Activated CD4-positive, alpha-beta memory T cell treated with anti-CD3 and anti-CD28 coated beads, Interleukin-2, amount 10 ng/mL, durations not matched to agents 7 days and 5 days (primary cell): ENCODE measurements at regions of chr16 and their contacts with region 1.

Region 1: GRCh38 chr16:30370444-30371247 is at the start of gene TBC1D10B:
- DNase-seq: peak; percentile 100
- H3K4me3 Mint-ChIP-seq: peak within 1 kb of the TSS; percentile 86
- H3K27ac Mint-ChIP-seq: peak within 1 kb of the TSS; percentile 90
- H3K4me1 Mint-ChIP-seq: peaks cover 41% of the 10 kb centered on the region
- H3K27me3 Mint-ChIP-seq: no peaks in the 10 kb centered on the region
- total RNA-seq, gene TBC1D10B: 69.2 TPM

Region 2: GRCh38 chr16:30335598-30336474 is 34.8 kb before region 1 on chr16:
- CTCF ChIA-PET with region 1: no interaction called
- POLR2A ChIA-PET with region 1: interaction called, 10 read pairs
- DNase-seq: peak; percentile 39
- H3K4me3 Mint-ChIP-seq: peak overlapping the region; percentile 89
- H3K27ac Mint-ChIP-seq: peak overlapping the region; percentile 63
- H3K4me1 Mint-ChIP-seq: peaks cover 20% of the 10 kb centered on the region
- H3K27me3 Mint-ChIP-seq: no peaks in the 10 kb centered on the region

Region 3: DNA sequence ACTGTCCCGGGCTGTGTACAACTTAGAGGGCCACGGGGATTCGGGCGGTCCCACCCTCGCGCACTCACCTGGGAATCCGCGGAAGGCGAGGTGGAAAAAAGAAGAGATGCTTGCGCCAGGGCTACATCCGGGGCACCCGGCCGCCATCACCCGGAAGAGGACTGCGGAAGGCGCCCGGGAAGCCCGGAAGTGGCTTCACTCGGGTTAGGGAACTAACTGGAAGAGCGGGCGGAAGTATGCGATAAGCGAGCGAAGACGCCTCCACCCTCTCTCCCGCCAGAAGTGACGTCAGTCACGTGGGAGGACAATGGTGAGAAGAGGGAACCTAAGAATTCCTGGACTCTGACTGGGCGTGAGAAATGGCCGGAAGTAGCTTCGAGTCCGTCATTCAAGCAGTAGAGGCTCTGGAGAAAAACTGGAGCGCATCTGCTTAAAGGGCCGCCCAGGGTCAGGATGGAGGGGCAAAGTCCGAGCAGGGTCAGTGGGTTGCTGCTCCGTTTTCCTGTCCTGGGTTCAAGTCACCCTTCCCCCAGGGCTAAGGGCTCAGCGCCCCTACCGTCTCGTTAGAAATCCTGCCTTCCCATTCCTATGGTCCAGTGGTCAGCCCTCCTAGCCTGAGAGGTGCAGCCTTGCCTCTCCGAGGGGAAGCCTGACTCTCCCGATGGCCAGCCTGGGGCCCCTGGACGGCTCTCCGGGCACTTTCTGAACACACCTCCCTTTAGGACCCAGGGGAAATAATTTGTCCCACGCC is 15.3 kb before region 1 on chr16 and contains the start of gene CD2BP2:
- CTCF ChIA-PET with region 1: interaction called, 9 read pairs
- POLR2A ChIA-PET with region 1: interaction called, 83 read pairs
- DNase-seq: peak; percentile 88
- H3K4me3 Mint-ChIP-seq: peak within 1 kb of the TSS; percentile 90
- H3K27ac Mint-ChIP-seq: peak within 1 kb of the TSS; percentile 93
- H3K4me1 Mint-ChIP-seq: peaks cover 66% of the 10 kb centered on the region
- H3K27me3 Mint-ChIP-seq: no peaks in the 10 kb centered on the region
- total RNA-seq, gene CD2BP2: 75.6 to 75.9 TPM

Region 4: DNA sequence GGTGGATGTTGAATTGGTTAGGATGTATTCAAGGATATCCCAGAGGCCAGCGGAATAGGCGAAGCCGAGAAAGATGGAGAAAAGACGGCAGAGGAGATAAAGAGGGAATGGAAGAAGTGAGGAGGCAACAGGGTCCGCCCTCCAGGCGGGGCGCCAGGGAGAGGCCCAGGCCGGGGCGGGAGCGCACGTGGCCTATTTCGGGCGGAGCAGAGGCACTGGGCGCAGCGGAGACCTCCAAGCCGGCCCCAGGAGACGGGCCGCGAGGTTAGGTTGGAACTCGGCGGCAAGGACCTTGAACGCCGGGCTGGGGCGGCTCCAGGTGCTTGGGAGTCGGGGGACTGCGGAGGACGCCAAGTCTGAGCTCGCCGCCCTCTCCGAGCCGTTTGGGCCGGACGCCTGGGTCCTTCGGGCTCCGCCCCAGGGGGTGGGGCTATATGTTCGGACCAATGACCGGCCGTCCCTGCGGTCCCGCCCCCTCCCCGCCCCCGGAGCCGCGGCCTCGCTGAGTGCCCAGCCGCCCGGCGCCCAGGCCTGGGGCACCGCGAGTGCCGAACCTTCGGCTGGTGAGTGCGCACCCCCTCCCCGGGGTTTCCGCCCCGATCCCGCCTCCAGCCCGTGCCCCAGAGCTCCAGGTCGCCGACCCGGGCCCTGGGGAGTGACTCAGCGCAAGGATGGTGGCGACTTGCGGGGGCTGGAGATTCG is 36.6 kb after region 1 on chr16 and contains the start of gene ZNF771:
- CTCF ChIA-PET with region 1: interaction called, 14 read pairs
- POLR2A ChIA-PET with region 1: interaction called, 11 read pairs
- DNase-seq: peak; percentile 92
- H3K4me3 Mint-ChIP-seq: peak within 1 kb of the TSS; percentile 89
- H3K27ac Mint-ChIP-seq: peak within 1 kb of the TSS; percentile 79
- H3K4me1 Mint-ChIP-seq: peaks cover 37% of the 10 kb centered on the region
- H3K27me3 Mint-ChIP-seq: peaks cover 3% of the 10 kb centered on the region
- total RNA-seq, gene ZNF771: 4.2 to 4.5 TPM

Region 5: GRCh38 chr16:30417529-30418349 is 47.1 kb after region 1 on chr16:
- CTCF ChIA-PET with region 1: interaction called, 10 read pairs
- POLR2A ChIA-PET with region 1: interaction called, 7 read pairs
- DNase-seq: peak; percentile 92
- H3K4me3 Mint-ChIP-seq: peak overlapping the region; percentile 60
- H3K27ac Mint-ChIP-seq: peak overlapping the region; percentile 64
- H3K4me1 Mint-ChIP-seq: peaks cover 41% of the 10 kb centered on the region
- H3K27me3 Mint-ChIP-seq: no peaks in the 10 kb centered on the region

Region 6: DNA sequence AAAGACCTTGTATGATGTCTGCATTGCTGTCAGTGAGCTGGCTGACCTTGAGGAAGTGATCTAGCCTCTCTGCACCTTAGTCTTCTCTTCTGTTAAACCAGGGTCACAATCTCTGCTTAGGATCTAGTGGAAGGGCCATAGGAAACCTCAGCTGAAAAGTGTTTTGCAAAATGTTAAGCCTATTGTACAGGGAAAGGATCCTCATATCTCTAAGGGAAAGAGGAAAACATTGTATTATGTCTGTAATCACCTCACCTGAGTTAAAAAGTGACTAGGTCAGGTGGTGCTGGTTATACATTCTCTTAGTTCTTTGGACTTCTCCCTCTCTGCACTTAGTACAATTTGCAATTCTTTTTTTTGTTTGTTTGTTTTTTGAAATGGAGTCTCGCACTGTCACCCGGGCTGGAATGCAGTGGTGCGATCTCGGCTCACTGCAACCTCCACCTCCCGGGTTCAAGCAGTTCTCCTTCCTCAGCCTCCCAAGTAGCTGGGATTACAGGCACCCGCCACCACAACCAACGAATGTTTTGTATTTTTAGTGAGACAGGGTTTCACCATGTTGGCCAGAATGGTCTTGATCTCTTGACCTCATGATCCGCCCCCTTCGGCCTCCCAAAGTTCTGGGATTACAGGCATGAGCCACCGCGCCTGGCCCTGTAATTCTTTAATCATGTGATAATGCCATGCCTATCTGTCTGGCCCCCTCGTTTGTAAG is 77.0 kb after region 1 on chr16:
- CTCF ChIA-PET with region 1: no interaction called
- POLR2A ChIA-PET with region 1: no interaction called
- DNase-seq: no peak
- H3K4me3 Mint-ChIP-seq: no peak overlapping the region
- H3K27ac Mint-ChIP-seq: no peak overlapping the region
- H3K4me1 Mint-ChIP-seq: peaks cover 69% of the 10 kb centered on the region
- H3K27me3 Mint-ChIP-seq: no peaks in the 10 kb centered on the region